ENCODE measurements at regions of chr2 and their contacts with region 1.

Region 1: GRCh38 chr2:206442833-206443734 is at the start of gene ADAM23:
- DNase-seq: peak in 1 of 2 experiments; percentile 54
- H3K4me3 ChIP-seq: peak within 1 kb of the TSS; percentile 62
- H3K27ac ChIP-seq: no peak within 1 kb of the TSS
- H3K4me1 ChIP-seq: peaks cover 18% of the 10 kb centered on the region
- H3K27me3 ChIP-seq: no peaks in the 10 kb centered on the region
- CTCF ChIP-seq: no peak
- total RNA-seq, gene ADAM23: 8.9 and 12.0 TPM in 2 replicates

Region 2: DNA sequence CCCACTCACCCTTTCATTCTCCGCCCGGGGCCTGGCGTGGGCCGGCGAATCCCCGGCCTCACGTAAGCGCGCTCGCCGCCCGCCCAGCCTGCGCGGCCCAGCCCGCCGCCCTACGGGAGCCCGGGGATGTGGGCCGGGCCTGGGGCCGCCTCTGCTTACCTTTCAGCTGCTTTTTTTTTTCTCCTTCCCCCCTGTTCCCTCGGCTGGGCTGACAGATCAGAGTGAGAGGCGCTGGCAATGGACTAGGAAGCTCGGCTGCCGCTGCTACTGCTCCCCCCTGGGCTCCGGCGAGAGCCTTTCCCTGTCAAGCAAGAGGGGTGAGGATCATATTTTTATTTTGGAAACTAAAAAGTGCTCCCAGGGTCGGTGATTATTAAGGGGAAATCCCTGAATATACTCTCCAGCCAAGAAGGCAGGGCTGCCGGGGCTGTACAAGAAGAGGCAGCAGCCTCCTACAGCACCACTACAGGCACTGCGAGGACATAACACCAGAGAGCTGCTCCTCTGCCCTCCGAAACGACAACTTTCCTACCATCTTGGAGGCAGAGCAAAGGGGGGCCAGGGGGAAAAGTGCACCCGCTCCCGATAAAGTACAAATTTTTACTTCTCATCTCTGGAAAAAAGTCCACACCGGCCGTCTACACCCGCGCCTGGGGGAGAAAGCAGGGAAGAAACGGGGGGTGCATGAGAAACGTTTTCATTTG is 357.2 kb before region 1 on chr2 and contains the start of gene INO80D:
- CTCF ChIA-PET with region 1: no interaction called
- POLR2A ChIA-PET with region 1: no interaction called
- intact Hi-C with region 1: loop called (anchors 10 kb)
- DNase-seq: peak; percentile 61 to 63
- H3K4me3 ChIP-seq: peak within 1 kb of the TSS; percentile 83
- H3K27ac ChIP-seq: peak within 1 kb of the TSS; percentile 84
- H3K4me1 ChIP-seq: peaks cover 13% of the 10 kb centered on the region
- H3K27me3 ChIP-seq: no peaks in the 10 kb centered on the region
- CTCF ChIP-seq: peak; percentile 55
- total RNA-seq, gene INO80D: 7.1 and 12.4 TPM in 2 replicates

Measured in PC-9 (cell line).